ENCODE measurements at regions of chr2 and their contacts with region 1.

Region 1: GRCh38 chr2:227890495-227891079 is 19.2 kb downstream of the DAW1 start:
- DNase-seq: peak in 3 of 14 experiments; percentile 46 to 57 (median 51)
- ATAC-seq: no peak
- H3K4me3 ChIP-seq: no peak overlapping the region
- H3K4me3 Mint-ChIP-seq: no peak overlapping the region
- H3K27ac ChIP-seq: no peak overlapping the region
- H3K27ac Mint-ChIP-seq: no peak overlapping the region
- H3K4me1 ChIP-seq: no peaks in the 10 kb centered on the region
- H3K4me1 Mint-ChIP-seq: no peaks in the 10 kb centered on the region
- H3K27me3 ChIP-seq: no peaks in the 10 kb centered on the region
- H3K27me3 Mint-ChIP-seq: peaks cover 3% of the 10 kb centered on the region
- CTCF ChIP-seq: peak; percentile 75

Region 2: GRCh38 chr2:227871375-227871788 is 19.2 kb before region 1 on chr2 and contains the start of gene DAW1:
- CTCF ChIA-PET with region 1: no interaction called
- POLR2A ChIA-PET with region 1: no interaction called
- intact Hi-C with region 1: no loop called
- DNase-seq: peak in 13 of 14 experiments; percentile 7 to 81 (median 34)
- ATAC-seq: peak; percentile 68
- H3K4me3 ChIP-seq: peak within 1 kb of the TSS; percentile 23
- H3K4me3 Mint-ChIP-seq: no peak within 1 kb of the TSS
- H3K27ac ChIP-seq: no peak within 1 kb of the TSS
- H3K27ac Mint-ChIP-seq: no peak within 1 kb of the TSS
- H3K4me1 ChIP-seq: peaks cover 8% of the 10 kb centered on the region
- H3K4me1 Mint-ChIP-seq: no peaks in the 10 kb centered on the region
- H3K27me3 ChIP-seq: peaks cover 8 to 21% of the 10 kb centered on the region in 2 experiments
- H3K27me3 Mint-ChIP-seq: peaks cover 37% of the 10 kb centered on the region
- CTCF ChIP-seq: no peak
- total RNA-seq, gene DAW1: not detected

Region 3: DNA sequence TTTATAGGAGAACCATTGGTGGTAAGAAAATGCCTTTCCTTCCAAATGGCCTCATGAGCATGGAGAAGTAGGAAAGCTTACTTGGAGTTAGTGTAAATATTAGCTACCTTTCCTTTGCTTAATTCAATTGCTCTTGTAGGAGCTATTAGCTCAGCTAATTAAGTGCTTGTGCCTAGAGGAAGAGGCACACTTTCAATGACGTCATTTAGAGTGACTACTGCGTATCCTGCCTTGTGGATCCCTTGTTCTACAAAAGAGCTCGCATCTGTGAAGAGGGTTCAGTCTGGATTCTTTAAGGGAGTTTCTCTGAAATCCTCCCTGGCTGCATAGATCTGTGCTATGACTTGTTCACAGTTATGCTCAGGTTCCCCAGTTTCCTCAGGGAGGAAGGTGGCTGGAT is 413.4 kb after region 1 on chr2:
- CTCF ChIA-PET with region 1: no interaction called
- POLR2A ChIA-PET with region 1: no interaction called
- intact Hi-C with region 1: no loop called
- DNase-seq: no peak
- ATAC-seq: no peak
- H3K4me3 ChIP-seq: no peak overlapping the region
- H3K4me3 Mint-ChIP-seq: no peak overlapping the region
- H3K27ac ChIP-seq: no peak overlapping the region
- H3K27ac Mint-ChIP-seq: no peak overlapping the region
- H3K4me1 ChIP-seq: no peaks in the 10 kb centered on the region
- H3K4me1 Mint-ChIP-seq: no peaks in the 10 kb centered on the region
- H3K27me3 ChIP-seq: no peaks in the 10 kb centered on the region
- H3K27me3 Mint-ChIP-seq: no peaks in the 10 kb centered on the region
- CTCF ChIP-seq: no peak

Region 4: GRCh38 chr2:229273723-229274338 is 1383.2 kb after region 1 on chr2:
- CTCF ChIA-PET with region 1: no interaction called
- POLR2A ChIA-PET with region 1: no interaction called
- intact Hi-C with region 1: loop called in 1 of 2 experiments (anchors 5 kb)
- DNase-seq: peak in 2 of 14 experiments; percentile 28 to 30
- ATAC-seq: no peak
- H3K4me3 ChIP-seq: no peak overlapping the region
- H3K4me3 Mint-ChIP-seq: no peak overlapping the region
- H3K27ac ChIP-seq: no peak overlapping the region
- H3K27ac Mint-ChIP-seq: no peak overlapping the region
- H3K4me1 ChIP-seq: no peaks in the 10 kb centered on the region
- H3K4me1 Mint-ChIP-seq: no peaks in the 10 kb centered on the region
- H3K27me3 ChIP-seq: peaks cover 4 to 20% of the 10 kb centered on the region in 2 experiments
- H3K27me3 Mint-ChIP-seq: peaks cover 38% of the 10 kb centered on the region
- CTCF ChIP-seq: peak; percentile 46

Region 5: DNA sequence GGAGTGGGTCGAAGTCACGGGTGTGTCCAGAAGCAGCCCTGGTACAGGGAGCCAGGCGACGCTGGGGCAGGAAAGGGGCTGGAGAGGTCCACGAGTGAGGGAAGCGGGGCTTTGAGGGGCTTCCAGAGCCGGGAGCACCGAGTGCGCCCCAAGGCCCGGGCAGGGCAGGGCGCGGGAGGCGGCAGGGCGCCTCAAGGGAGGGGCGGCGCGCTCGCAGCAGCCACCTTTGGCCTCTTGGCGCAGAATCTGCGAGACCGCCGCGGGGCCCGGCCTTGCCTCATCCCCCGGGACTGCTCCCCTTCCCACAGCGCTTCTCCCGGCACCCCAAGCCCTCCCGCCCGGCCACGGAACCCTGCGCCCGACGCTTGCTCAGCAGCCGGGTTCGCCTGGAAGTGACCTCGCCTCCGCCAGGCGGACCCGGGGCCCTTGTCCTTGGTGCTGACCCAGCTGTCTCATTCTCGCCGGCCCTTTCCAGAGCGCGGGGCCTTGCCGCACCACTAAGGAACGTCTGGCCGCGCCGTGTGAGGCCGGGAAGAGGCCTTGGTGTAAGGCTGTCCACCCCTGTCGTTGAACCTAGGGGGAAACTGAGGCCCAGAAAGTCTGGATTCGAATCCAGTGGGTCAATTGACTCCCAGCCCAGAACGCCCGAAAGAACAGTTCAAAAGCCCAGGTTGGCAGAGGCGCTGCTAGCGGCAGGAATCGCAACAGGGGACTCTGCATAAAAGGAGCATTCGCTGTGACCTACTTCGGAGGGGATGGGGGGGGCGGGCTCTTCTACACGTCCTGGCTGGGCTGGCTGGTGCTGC is 1824.4 kb after region 1 on chr2:
- CTCF ChIA-PET with region 1: no interaction called
- POLR2A ChIA-PET with region 1: no interaction called
- intact Hi-C with region 1: loop called in 1 of 2 experiments (anchors 5 kb)
- DNase-seq: peak in 5 of 14 experiments; percentile 2 to 46 (median 38)
- ATAC-seq: peak; percentile 30
- H3K4me3 ChIP-seq: peak overlapping the region; percentile 28
- H3K4me3 Mint-ChIP-seq: peak overlapping the region; percentile 49
- H3K27ac ChIP-seq: no peak overlapping the region
- H3K27ac Mint-ChIP-seq: no peak overlapping the region
- H3K4me1 ChIP-seq: peaks cover 25% of the 10 kb centered on the region
- H3K4me1 Mint-ChIP-seq: peaks cover 20% of the 10 kb centered on the region
- H3K27me3 ChIP-seq: peaks cover 50 to 66% of the 10 kb centered on the region in 2 experiments
- H3K27me3 Mint-ChIP-seq: peaks cover 83% of the 10 kb centered on the region
- CTCF ChIP-seq: no peak

Measured in CD4-positive, alpha-beta T cell (primary cell).